Panc1 (cell line): ENCODE measurements at regions of chr6 and their contacts with region 1.

Region 1: GRCh38 chr6:32190054-32190851 is at the start of gene PBX2:
- DNase-seq: no peak
- ATAC-seq: peak; percentile 79
- H3K4me3 ChIP-seq: peak within 1 kb of the TSS; percentile 42 to 74
- H3K27ac ChIP-seq: peak within 1 kb of the TSS; percentile 94
- H3K4me1 ChIP-seq: peaks cover 32% of the 10 kb centered on the region
- H3K27me3 ChIP-seq: no peaks in the 10 kb centered on the region
- CTCF ChIP-seq: no peak
- total RNA-seq, gene PBX2: 76.2 TPM

Region 2: DNA sequence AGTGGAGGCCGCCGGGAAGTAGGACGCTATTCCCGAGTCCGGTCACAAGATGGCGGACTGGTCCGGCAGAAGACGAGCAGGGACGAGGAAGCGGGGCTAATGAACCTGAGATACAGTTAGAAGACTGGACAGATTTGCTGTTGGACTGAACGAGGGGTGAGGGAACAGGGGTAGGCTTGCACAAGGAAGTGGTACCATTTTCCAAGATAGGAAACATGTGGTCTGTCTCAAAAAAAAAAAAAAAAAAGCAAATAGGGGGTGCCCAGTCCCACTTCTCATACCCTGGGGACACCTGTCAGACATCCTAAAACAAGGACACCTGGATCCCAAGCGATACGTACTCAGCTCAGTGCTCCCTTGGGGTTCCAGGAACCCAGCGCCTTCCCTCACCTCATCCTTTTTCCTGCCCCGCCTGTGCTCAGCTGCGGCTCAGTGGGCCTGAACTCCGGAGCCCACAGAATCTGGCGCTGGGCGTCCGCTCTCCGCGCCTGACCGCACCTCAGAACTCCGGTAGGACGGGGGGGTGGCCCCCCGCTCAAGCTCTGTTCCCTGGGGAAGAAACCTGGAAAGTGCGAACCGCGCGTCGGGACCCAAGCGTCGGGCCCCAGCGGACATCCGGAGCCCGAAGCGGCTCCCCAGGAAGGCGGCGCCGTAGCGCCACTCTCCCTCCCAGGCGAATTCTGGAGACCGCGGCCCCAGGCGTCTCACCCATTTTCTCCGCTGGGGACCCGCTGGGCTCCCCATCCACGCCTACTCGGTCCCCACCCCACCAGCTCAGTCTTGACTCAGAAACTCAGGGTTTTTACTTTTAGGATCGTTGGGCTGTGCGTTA is 509.2 kb before region 1 on chr6 and contains the start of gene LY6G5C:
- CTCF ChIA-PET with region 1: no interaction called
- POLR2A ChIA-PET with region 1: no interaction called
- in situ Hi-C with region 1: no loop called
- intact Hi-C with region 1: no loop called
- DNase-seq: peak; percentile 30
- ATAC-seq: peak; percentile 92
- H3K4me3 ChIP-seq: no peak within 1 kb of the TSS; a peak in 1 of 4 replicates
- H3K27ac ChIP-seq: no peak within 1 kb of the TSS; the same call in 1 of the 2 replicates
- H3K4me1 ChIP-seq: peaks cover 4% of the 10 kb centered on the region; the same call in 1 of the 2 replicates
- H3K27me3 ChIP-seq: no peaks in the 10 kb centered on the region
- CTCF ChIP-seq: peak; percentile 86
- total RNA-seq, gene LY6G5C: 0.62 TPM

Region 3: DNA sequence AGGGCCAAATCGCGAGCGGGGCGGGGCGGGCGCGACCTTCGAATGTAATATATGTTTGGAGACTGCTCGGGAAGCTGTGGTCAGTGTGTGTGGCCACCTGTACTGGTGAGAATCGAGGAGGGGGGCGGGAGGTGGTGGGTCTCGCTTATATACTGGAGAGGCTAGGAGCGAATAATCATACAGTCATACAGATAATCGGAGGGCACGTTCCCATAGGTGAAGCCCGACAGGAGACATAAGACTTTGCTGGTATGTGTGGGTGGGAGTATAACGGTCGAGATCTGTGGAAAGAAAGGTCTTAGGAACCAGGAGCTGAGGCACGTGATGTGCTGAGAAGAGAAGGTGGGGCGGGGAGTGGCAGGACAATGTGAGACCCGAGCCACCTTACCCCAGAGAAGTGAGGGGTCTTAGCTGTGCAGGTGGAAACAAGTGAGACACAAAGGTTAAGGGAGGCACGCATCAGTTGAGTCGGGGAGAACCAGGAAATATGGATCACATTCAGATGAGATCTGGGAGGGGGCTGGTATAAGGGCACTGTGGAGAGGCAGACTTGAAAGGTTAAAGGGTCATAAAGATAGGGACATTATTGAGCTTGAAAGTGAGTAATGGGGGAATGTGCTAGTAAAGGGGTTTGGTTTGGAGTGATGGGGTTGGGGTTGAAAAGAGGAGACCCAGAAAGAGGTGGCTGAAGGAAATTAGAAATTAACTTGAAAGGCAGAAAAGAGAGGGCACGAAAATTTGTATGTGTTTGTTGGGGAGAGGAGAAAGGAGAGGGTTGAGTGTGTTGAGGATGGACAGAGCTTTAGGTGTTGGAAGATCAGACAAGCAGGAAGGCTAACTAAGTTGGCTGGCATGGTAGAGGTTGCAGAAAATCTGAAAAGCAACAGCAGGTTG is 11.5 kb before region 1 on chr6:
- CTCF ChIA-PET with region 1: interaction called, 3 read pairs
- POLR2A ChIA-PET with region 1: interaction called, 10 read pairs
- in situ Hi-C with region 1: no loop called
- intact Hi-C with region 1: no loop called
- DNase-seq: no peak
- ATAC-seq: no peak
- H3K4me3 ChIP-seq: peak overlapping the region; percentile 61 to 64
- H3K27ac ChIP-seq: peak overlapping the region; percentile 98
- H3K4me1 ChIP-seq: peaks cover 30% of the 10 kb centered on the region
- H3K27me3 ChIP-seq: no peaks in the 10 kb centered on the region
- CTCF ChIP-seq: no peak